ENCODE measurements at regions of chr3 and their contacts with region 1.

Region 1: DNA sequence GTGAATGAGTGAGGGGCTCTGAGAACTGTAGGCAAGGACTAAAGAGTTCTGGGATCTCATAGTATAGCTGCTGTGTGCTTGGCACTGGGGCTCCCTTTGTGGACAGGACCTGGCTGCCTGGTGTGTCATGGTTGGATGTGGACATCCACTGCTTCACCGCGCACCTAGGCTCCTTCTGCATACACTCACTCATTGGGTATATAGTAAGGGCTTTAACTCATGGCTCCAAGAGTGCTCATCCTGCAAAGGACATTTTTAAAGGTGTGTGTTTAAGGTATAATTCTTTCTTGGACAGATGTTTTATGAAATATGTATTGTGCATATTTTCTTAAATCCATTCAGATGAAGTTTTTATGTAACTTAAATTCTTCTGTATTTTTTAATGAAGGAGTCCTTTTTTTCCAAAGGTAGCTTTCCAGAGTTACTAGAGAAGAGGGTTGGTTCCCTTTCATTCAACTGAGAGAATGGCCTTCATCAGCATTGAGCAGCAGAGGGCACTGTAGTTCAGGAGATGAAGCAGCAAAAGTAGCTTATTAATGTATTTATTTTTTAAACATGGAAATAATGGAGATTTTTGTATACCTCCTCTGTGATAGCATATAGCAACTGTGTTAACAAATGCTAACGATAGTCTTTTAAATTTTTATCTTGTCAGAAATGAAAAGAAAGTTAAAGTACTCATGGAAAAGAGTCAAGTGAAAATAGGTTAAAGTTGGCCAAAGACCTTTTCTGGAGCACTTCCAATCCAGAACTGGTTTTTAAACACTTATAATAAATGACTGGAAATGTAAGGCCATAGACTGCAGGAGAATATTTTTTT is 25.2 kb downstream of the OXNAD1 start:
- DNase-seq: peak; percentile 28
- H3K4me3 ChIP-seq: no peak overlapping the region
- H3K27ac ChIP-seq: no peak overlapping the region
- H3K4me1 ChIP-seq: peaks cover 4% of the 10 kb centered on the region
- H3K27me3 ChIP-seq: no peaks in the 10 kb centered on the region
- CTCF ChIP-seq: peak; percentile 69 to 77

Region 2: DNA sequence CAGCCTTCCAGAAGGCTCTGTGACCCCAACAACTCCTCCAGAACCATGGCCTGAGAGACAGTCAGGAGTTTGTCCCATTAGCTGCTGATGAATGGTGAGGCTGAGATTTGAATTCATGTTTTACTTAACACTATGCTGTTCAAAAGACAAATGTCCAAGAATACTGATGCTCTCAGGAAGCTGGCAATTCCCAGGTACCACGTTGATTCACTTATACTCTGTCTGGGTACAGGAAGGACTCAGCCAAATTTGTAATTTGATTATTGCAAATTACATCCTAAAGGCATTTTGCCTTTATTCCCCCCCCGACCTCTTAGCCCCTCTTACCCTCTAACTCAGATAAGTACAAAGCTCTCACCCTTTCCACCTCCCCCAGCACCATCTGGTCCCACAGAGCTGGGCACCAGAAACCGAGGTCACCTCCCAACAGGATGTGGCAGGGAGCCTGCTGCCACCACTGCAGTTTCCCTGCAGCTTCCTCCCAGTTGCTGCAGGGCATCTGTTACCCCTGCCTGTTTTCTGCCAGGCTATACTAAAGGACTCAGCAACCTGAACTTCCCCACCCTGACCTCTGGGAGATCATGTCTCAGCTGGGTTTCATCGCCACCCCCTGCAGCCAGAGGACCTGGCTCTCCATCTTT is 829.2 kb before region 1 on chr3:
- CTCF ChIA-PET with region 1: no interaction called
- dilution Hi-C with region 1: no loop called
- in situ Hi-C with region 1: no loop called
- intact Hi-C with region 1: no loop called
- DNase-seq: no peak
- H3K4me3 ChIP-seq: no peak overlapping the region
- H3K27ac ChIP-seq: no peak overlapping the region
- H3K4me1 ChIP-seq: no peaks in the 10 kb centered on the region
- H3K27me3 ChIP-seq: no peaks in the 10 kb centered on the region
- CTCF ChIP-seq: no peak

Region 3: DNA sequence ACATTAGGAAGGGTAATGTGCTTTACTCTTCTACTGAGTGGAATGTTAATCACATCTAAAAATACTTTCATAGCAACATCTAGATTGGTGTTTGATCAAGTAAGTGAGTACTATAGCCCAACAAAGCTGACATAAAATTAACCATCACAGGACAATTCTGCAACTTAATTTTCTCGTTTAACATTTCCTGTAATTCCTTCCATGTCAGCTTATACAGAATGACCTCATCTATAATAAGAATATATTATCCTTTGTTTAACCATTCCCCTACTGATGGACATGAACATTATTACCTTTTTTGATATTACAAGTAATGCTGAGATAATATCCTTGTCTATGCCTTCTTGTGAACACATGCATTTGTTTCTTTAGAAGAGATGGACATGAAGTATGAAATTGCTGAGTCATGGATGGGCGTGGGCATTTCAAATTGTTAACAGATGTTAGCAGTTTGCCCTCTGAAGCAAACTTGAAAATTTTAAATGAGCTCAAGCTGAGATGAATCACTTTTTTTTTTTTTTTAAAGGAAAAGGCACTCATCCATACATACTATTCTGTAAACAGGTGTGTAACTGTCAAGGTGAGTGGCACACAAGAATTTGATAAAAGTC is 59.9 kb after region 1 on chr3:
- CTCF ChIA-PET with region 1: no interaction called
- dilution Hi-C with region 1: loop called (anchors 5 kb)
- in situ Hi-C with region 1: no loop called
- intact Hi-C with region 1: no loop called
- DNase-seq: peak; percentile 66
- H3K4me3 ChIP-seq: no peak overlapping the region
- H3K27ac ChIP-seq: no peak overlapping the region
- H3K4me1 ChIP-seq: no peaks in the 10 kb centered on the region
- H3K27me3 ChIP-seq: no peaks in the 10 kb centered on the region
- CTCF ChIP-seq: no peak

Region 4: DNA sequence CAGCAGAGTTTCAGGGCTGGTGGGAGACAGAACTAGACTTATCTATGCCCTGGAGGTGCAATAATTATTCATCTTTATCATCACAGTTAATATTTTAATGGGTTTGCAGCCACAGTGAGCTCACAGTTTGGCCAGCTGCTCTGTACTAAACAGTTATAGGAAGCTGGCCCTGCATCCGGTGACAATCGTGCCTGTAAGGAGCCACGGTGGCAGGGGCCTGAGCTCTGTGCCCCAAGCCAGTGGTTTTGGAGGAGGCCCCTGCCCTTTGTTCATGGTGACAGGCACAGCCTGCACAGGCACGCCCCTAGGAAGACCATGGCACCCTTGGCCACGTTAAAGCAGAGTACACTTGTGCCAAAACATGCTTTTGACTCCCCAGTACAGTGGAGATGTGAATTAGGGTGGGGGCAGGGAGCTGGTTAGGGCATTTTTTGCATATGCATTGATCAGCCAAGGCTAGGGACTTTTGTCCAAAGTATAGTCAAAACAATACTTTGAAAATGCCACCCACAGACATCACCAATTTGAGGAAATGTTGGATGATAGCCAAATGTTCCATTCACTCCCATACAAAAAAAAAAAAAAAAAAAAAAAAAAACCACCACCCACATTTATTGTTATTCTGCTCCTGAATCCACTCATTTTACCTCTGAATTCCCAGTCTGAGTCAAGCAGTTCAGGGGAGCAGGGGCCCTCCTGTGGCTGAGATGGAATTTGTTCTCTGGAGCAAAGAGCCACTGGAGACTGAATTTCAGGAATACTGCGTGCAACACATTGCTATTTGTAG is 226.7 kb after region 1 on chr3:
- CTCF ChIA-PET with region 1: interaction called, 34 read pairs
- dilution Hi-C with region 1: no loop called
- in situ Hi-C with region 1: no loop called
- intact Hi-C with region 1: loop called (anchors 1 kb)
- DNase-seq: peak; percentile 35
- H3K4me3 ChIP-seq: no peak overlapping the region
- H3K27ac ChIP-seq: no peak overlapping the region
- H3K4me1 ChIP-seq: peaks cover 15% of the 10 kb centered on the region
- H3K27me3 ChIP-seq: peaks cover 2% of the 10 kb centered on the region
- CTCF ChIP-seq: peak; percentile 23 to 61